ENCODE measurements at regions of chr2 and their contacts with region 1.

Region 1: GRCh38 chr2:108583903-108584520 is 49.7 kb downstream of the LIMS1 start:
- DNase-seq: peak; percentile 66
- H3K4me3 Mint-ChIP-seq: no peak overlapping the region
- H3K27ac Mint-ChIP-seq: no peak overlapping the region
- H3K4me1 Mint-ChIP-seq: peaks cover 29% of the 10 kb centered on the region
- H3K27me3 Mint-ChIP-seq: no peaks in the 10 kb centered on the region

Region 2: GRCh38 chr2:108184419-108184818 is 399.6 kb before region 1 on chr2:
- CTCF ChIA-PET with region 1: no interaction called
- POLR2A ChIA-PET with region 1: no interaction called
- intact Hi-C with region 1: loop called (anchors 5 kb)
- DNase-seq: no peak
- H3K4me3 Mint-ChIP-seq: no peak overlapping the region
- H3K27ac Mint-ChIP-seq: no peak overlapping the region
- H3K4me1 Mint-ChIP-seq: no peaks in the 10 kb centered on the region
- H3K27me3 Mint-ChIP-seq: peaks cover 3% of the 10 kb centered on the region

Region 3: GRCh38 chr2:108396845-108397244 is 187.2 kb before region 1 on chr2:
- CTCF ChIA-PET with region 1: interaction called, 3 read pairs
- POLR2A ChIA-PET with region 1: no interaction called
- intact Hi-C with region 1: loop called (anchors 1 kb)
- DNase-seq: peak; percentile 14
- H3K4me3 Mint-ChIP-seq: no peak overlapping the region
- H3K27ac Mint-ChIP-seq: no peak overlapping the region
- H3K4me1 Mint-ChIP-seq: no peaks in the 10 kb centered on the region
- H3K27me3 Mint-ChIP-seq: peaks cover 3% of the 10 kb centered on the region

Region 4: GRCh38 chr2:108492364-108492763 is 91.6 kb before region 1 on chr2:
- CTCF ChIA-PET with region 1: interaction called, 4 read pairs
- POLR2A ChIA-PET with region 1: no interaction called
- intact Hi-C with region 1: loop called (anchors 5 kb)
- DNase-seq: no peak
- H3K4me3 Mint-ChIP-seq: no peak overlapping the region
- H3K27ac Mint-ChIP-seq: peak overlapping the region; percentile 68
- H3K4me1 Mint-ChIP-seq: peaks cover 17% of the 10 kb centered on the region
- H3K27me3 Mint-ChIP-seq: no peaks in the 10 kb centered on the region

Region 5: GRCh38 chr2:108594132-108594981 is 10.3 kb after region 1 on chr2:
- CTCF ChIA-PET with region 1: interaction called, 28 read pairs
- POLR2A ChIA-PET with region 1: interaction called, 3 read pairs
- intact Hi-C with region 1: no loop called
- DNase-seq: no peak
- H3K4me3 Mint-ChIP-seq: peak overlapping the region; percentile 38
- H3K27ac Mint-ChIP-seq: peak overlapping the region; percentile 73
- H3K4me1 Mint-ChIP-seq: peaks cover 48% of the 10 kb centered on the region
- H3K27me3 Mint-ChIP-seq: no peaks in the 10 kb centered on the region

Region 6: DNA sequence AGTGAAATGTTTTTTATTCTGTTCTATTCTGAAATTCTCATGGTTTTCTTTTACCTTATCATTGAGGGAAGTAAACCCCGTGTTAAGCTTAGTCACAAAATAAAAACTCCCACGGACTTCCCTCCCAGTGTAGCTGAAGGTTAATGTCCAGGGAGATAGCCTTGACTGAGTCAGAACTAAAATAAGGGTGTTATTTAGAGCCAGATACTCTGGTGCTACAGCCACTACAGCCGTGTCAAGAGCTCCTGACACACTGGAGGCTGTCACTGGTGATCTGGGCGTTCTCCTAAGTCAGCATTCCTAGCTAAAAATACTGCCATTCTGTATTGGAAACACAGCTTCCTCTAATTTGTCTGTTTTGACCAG is 53.3 kb after region 1 on chr2:
- CTCF ChIA-PET with region 1: interaction called, 20 read pairs
- POLR2A ChIA-PET with region 1: no interaction called
- intact Hi-C with region 1: no loop called
- DNase-seq: no peak
- H3K4me3 Mint-ChIP-seq: no peak overlapping the region
- H3K27ac Mint-ChIP-seq: peak overlapping the region; percentile 76
- H3K4me1 Mint-ChIP-seq: peaks cover 85% of the 10 kb centered on the region
- H3K27me3 Mint-ChIP-seq: no peaks in the 10 kb centered on the region

Measured in activated CD4-positive, alpha-beta memory T cell treated with anti-CD3 and anti-CD28 coated beads for 36 hours (primary cell).